ENCODE measurements at regions of chr1 and their contacts with region 1.

Region 1: DNA sequence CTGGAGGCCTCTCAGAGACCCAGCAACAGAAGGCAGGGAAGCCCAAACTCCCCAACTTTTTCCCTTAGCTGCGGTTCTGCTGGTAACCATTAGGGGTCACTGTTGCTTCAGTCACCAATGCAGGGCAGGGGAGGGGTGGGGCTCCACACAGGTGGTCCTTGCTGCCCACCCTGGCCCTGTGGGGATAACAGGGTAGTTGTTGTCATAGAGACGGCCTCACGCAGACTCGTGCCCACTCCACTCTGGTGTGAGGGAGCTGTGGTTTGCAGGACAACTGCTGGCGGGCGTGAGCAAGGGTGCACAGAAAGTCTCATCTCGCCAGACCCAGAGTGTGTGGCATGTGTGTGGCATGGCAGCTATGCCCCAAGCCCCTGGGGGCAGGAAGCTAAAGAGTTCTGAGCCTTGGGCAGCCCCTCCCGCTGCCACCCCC is 19.9 kb downstream of the INSRR start:
- DNase-seq: peak; percentile 52 to 76
- ATAC-seq: peak; percentile 65 to 79 (median 75)
- H3K4me3 ChIP-seq: no peak overlapping the region
- H3K4me3 Mint-ChIP-seq: no peak overlapping the region
- H3K27ac ChIP-seq: no peak overlapping the region
- H3K27ac Mint-ChIP-seq: peak overlapping the region in 1 of 2 donors; percentile 81
- H3K4me1 ChIP-seq: peaks cover 10% of the 10 kb centered on the region
- H3K4me1 Mint-ChIP-seq: peaks cover 9 to 32% of the 10 kb centered on the region in 2 donors
- H3K27me3 ChIP-seq: peaks cover 10% of the 10 kb centered on the region
- H3K27me3 Mint-ChIP-seq: peaks cover 12 to 25% of the 10 kb centered on the region in 2 donors
- CTCF ChIP-seq: peak; percentile 91

Region 2: DNA sequence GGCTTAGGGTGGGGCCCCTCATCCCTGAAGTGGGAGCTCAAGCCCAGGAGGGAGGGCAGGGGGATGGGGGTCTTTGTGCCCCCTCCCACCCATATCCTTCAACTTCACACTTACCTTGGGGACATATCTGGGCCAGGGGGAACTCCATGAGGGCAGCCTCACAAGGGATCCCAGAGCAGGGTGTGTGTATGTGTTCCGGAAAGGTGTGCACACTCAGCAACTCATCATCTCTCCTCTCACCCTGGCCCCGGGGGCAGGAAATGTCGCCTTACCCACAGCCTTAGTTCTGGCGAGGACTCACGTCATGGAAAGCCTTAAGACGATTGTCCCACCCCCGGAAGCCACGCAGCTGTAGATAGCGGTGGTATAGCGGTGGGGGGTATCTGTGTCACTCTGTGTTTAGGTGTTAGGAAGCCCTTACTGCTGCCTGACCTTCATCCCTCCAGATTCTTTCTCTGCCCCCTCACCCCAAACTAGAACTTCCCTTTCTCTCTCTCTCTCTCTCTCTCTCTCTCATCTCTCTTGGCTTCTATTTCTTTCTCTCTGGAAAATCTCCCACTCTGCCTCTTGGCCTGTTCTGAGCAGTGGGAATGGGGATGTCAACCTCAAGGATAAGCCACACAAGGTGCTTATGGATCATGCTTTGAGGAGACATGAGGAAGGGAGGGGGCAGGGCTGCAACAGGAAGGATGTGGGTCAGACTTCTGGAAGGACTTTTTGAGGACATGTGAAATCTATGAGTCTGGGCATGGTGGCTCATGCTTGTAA is 22.3 kb before region 1 on chr1 and contains the start of gene SH2D2A:
- intact Hi-C with region 1: loop called (anchors 2 kb)
- DNase-seq: peak; percentile 94 to 100
- ATAC-seq: peak; percentile 77 to 92 (median 84)
- H3K4me3 ChIP-seq: peak within 1 kb of the TSS; percentile 76
- H3K4me3 Mint-ChIP-seq: peak within 1 kb of the TSS; percentile 96
- H3K27ac ChIP-seq: peak within 1 kb of the TSS; percentile 99
- H3K27ac Mint-ChIP-seq: peak within 1 kb of the TSS; percentile 98
- H3K4me1 ChIP-seq: peaks cover 61% of the 10 kb centered on the region
- H3K4me1 Mint-ChIP-seq: peaks cover 67 to 79% of the 10 kb centered on the region in 2 donors
- H3K27me3 ChIP-seq: no peaks in the 10 kb centered on the region
- H3K27me3 Mint-ChIP-seq: no peaks in the 10 kb centered on the region
- CTCF ChIP-seq: no peak
- total RNA-seq, gene SH2D2A: 155 to 324 (median 312) TPM

Region 3: DNA sequence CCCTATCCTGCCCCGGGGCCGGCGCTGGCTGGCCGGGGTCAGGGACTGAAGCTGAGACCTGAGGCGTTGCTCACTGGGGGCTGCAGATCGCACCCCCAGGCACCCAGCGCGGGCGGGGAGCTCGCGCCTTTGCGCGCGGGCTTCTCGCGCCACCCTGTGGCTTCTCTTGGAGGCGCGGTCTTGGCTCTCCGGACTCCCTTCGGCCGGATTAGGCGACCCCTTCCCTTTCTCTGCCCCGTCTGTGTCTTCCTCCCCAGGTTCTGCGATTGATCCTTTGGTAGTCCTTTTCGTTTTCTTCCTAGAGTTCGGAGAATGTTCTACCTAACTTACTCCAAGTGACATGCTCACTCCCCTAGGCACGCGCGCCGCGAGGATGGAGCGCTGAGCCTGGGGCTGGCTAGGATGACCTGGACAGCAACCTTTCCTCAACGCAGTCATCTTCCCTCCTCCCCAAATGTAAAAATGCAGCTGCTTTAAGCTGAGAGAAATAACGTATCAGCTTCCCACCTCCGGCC is 21.2 kb after region 1 on chr1:
- intact Hi-C with region 1: loop called (anchors 2 kb)
- DNase-seq: peak; percentile 66 to 78
- ATAC-seq: peak; percentile 70 to 77 (median 75)
- H3K4me3 ChIP-seq: peak overlapping the region; percentile 25
- H3K4me3 Mint-ChIP-seq: peak overlapping the region; percentile 84
- H3K27ac ChIP-seq: no peak overlapping the region
- H3K27ac Mint-ChIP-seq: peak overlapping the region in 1 of 2 donors; percentile 78
- H3K4me1 ChIP-seq: peaks cover 25% of the 10 kb centered on the region
- H3K4me1 Mint-ChIP-seq: peaks cover 12 to 31% of the 10 kb centered on the region in 2 donors
- H3K27me3 ChIP-seq: peaks cover 39% of the 10 kb centered on the region
- H3K27me3 Mint-ChIP-seq: peaks cover 48 to 50% of the 10 kb centered on the region in 2 donors
- CTCF ChIP-seq: peak; percentile 91

Region 4: GRCh38 chr1:156874572-156875340 is 35.8 kb after region 1 on chr1:
- intact Hi-C with region 1: loop called (anchors 5 kb)
- DNase-seq: no peak
- ATAC-seq: no peak
- H3K4me3 ChIP-seq: no peak overlapping the region
- H3K4me3 Mint-ChIP-seq: no peak overlapping the region
- H3K27ac ChIP-seq: no peak overlapping the region
- H3K27ac Mint-ChIP-seq: no peak overlapping the region
- H3K4me1 ChIP-seq: no peaks in the 10 kb centered on the region
- H3K4me1 Mint-ChIP-seq: no peaks in the 10 kb centered on the region
- H3K27me3 ChIP-seq: no peaks in the 10 kb centered on the region
- H3K27me3 Mint-ChIP-seq: peaks cover 19 to 21% of the 10 kb centered on the region in 2 donors
- CTCF ChIP-seq: no peak

Region 5: DNA sequence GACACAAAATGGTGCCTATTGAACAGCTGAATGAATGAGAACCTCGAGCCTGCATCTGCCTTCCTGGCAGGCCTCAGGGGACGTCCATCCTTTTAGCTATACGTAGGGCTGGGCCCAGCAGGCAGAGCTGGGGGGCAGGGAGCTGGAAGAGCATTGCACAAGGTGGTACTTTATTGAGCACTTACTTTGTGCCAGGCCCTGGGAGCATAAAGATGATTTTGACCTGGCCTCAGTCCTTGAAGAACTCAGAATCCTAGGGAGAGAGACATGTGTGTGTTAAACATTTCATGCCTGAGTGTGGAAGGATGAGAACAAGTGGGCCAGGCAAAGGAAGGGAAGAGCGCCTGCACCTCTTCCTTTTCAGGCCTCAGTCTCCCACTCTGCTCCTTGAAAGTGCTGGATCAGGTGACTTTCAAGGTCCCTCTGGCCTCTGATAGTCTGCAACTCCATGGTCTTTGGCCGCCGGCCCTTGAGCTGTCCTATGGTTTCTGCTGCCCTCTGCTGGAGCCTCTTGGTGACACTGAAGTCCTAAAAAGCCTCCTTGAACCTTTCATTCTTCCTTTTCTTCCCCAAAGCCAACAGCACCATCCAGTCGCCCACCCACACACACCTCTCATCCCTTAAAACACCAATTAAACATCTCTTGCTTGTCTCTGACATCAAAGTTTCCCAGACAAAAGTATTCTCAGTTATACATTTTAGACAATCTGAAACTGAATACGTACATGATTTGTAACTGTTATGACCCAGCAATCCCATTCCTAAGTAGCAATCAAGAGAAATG is 51.0 kb after region 1 on chr1:
- intact Hi-C with region 1: loop called (anchors 2 kb)
- DNase-seq: peak; percentile 44 to 73
- ATAC-seq: peak; percentile 38 to 53 (median 45)
- H3K4me3 ChIP-seq: no peak overlapping the region
- H3K4me3 Mint-ChIP-seq: peak overlapping the region; percentile 29
- H3K27ac ChIP-seq: no peak overlapping the region
- H3K27ac Mint-ChIP-seq: no peak overlapping the region
- H3K4me1 ChIP-seq: peaks cover 20% of the 10 kb centered on the region
- H3K4me1 Mint-ChIP-seq: peaks cover 8 to 21% of the 10 kb centered on the region in 2 donors
- H3K27me3 ChIP-seq: peaks cover 29% of the 10 kb centered on the region
- H3K27me3 Mint-ChIP-seq: peaks cover 30 to 46% of the 10 kb centered on the region in 2 donors
- CTCF ChIP-seq: peak; percentile 78